ENCODE measurements at regions of chr4 and their contacts with region 1.

Region 1: GRCh38 chr4:40515398-40516293 is 114.0 kb downstream of the RBM47 start:
- DNase-seq: no peak
- H3K4me3 Mint-ChIP-seq: no peak overlapping the region
- H3K27ac Mint-ChIP-seq: peak overlapping the region; percentile 74
- H3K4me1 Mint-ChIP-seq: peaks cover 42% of the 10 kb centered on the region
- H3K27me3 Mint-ChIP-seq: peaks cover 3% of the 10 kb centered on the region

Region 2: DNA sequence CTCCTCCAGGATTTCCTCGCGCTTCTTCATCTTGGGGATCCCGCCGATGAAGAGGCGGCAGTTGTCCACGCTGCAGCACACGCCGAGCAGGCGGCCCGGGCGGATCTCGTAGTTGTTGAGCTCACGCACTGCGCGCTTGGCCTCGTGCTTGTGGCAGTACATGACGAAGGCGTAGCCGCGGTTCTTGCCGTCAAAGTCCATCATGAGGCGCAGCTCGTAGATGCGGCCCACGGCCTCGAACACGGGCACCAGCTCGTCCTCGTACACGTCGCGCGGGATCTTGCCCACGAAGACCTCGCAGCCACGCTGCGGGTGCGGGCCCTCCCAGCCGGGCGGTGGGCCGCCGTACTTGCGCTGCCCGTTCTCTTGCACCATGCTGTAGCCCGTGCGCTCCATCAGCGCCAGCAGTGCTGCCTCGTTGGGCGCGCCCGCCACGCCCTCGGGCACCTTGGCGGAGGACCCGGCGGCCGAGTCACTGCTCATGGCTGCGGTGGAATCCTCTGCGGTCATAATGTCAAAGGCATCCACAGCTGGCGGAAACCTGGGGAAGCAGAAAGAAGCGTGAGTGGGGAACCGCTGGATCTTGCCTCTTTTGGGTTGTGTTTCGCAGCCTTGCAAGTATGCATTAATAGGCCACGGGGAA is 77.1 kb before region 1 on chr4:
- intact Hi-C with region 1: loop called (anchors 1 kb)
- DNase-seq: no peak
- H3K4me3 Mint-ChIP-seq: peak overlapping the region; percentile 3
- H3K27ac Mint-ChIP-seq: peak overlapping the region; percentile 8
- H3K4me1 Mint-ChIP-seq: peaks cover 54% of the 10 kb centered on the region
- H3K27me3 Mint-ChIP-seq: no peaks in the 10 kb centered on the region

Region 3: GRCh38 chr4:40466789-40467188 is 48.9 kb before region 1 on chr4:
- intact Hi-C with region 1: loop called (anchors 2 kb)
- DNase-seq: no peak
- H3K4me3 Mint-ChIP-seq: no peak overlapping the region
- H3K27ac Mint-ChIP-seq: peak overlapping the region; percentile 72
- H3K4me1 Mint-ChIP-seq: peaks cover 28% of the 10 kb centered on the region
- H3K27me3 Mint-ChIP-seq: no peaks in the 10 kb centered on the region

Region 4: DNA sequence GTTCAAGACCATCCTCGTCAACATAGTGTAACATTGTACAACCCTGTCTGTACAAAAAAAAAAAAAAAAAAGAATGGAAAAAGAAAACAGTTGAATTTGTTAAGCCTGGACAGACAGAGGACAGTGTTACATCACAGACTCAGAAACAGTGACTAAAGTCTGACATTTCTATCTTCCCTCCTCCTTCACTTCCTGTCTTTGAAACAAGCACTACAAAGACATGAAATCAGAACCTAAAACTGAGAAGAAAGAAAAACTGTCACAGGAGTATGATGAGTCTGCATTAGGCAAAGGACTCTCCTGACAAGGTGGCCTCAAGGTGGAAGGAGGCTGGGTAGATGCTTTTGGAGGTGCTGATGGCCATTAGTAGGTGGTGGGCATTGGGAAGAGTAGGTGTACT is 12.7 kb before region 1 on chr4:
- intact Hi-C with region 1: loop called (anchors 1 kb)
- DNase-seq: no peak
- H3K4me3 Mint-ChIP-seq: peak overlapping the region; percentile 58
- H3K27ac Mint-ChIP-seq: peak overlapping the region; percentile 87
- H3K4me1 Mint-ChIP-seq: peaks cover 17% of the 10 kb centered on the region
- H3K27me3 Mint-ChIP-seq: no peaks in the 10 kb centered on the region

Region 5: GRCh38 chr4:40550948-40551462 is 35.4 kb after region 1 on chr4:
- intact Hi-C with region 1: loop called (anchors 1 kb)
- DNase-seq: peak; percentile 37
- H3K4me3 Mint-ChIP-seq: peak overlapping the region; percentile 84
- H3K27ac Mint-ChIP-seq: peak overlapping the region; percentile 81
- H3K4me1 Mint-ChIP-seq: peaks cover 65% of the 10 kb centered on the region
- H3K27me3 Mint-ChIP-seq: no peaks in the 10 kb centered on the region

Region 6: GRCh38 chr4:40662962-40663604 is 147.4 kb after region 1 on chr4:
- intact Hi-C with region 1: loop called (anchors 5 kb)
- DNase-seq: no peak
- H3K4me3 Mint-ChIP-seq: no peak overlapping the region
- H3K27ac Mint-ChIP-seq: peak overlapping the region; percentile 81
- H3K4me1 Mint-ChIP-seq: peaks cover 31% of the 10 kb centered on the region
- H3K27me3 Mint-ChIP-seq: peaks cover 1% of the 10 kb centered on the region

Measured in activated T-helper 1 cell treated with anti-CD3 and anti-CD28 coated beads, Interleukin-12 subunit alpha, Interleukin-12 subunit beta, Interleukin-2, Interleukin-4 antibody, amounts not matched to agents 30 ng/mL and 10 ng/mL and 1 ng/mL, durations not matched to agents 14 hours and 24 hours and 36 hours (primary cell).